ENCODE measurements at regions of chr17 and their contacts with region 1.

Region 1: GRCh38 chr17:42720996-42721583 is 23.8 kb downstream of the EZH1 start:
- DNase-seq: no peak
- H3K4me3 ChIP-seq: no peak overlapping the region
- H3K27ac ChIP-seq: no peak overlapping the region
- H3K4me1 ChIP-seq: no peaks in the 10 kb centered on the region
- H3K27me3 ChIP-seq: no peaks in the 10 kb centered on the region
- CTCF ChIP-seq: peak; percentile 58 to 76 (median 66)
- EP300 ChIP-seq: no peak
- POLR2A ChIP-seq: no peak

Region 2: DNA sequence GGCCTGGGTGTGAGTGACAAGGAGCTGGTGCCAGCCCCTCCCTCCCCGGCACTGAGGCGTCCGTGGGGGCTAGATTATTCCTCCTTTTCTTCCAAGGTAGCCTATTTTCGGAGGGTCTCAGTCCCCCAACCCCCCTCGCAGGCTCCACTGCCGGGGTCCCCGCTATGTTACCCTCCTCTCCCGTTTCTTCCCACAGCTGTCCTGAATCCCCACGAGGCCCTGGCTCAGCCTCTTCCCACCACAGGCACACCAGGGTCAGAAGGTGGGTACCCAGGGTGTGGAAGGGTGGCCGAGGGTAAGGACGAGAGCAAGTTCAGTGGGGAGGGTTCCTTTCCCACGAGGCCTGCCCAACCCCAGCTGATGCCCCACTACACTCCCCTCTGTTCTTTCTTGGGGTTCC is 40.5 kb after region 1 on chr17:
- intact Hi-C with region 1: loop called (anchors 2 kb)
- DNase-seq: no peak
- H3K4me3 ChIP-seq: peak overlapping the region; percentile 64 to 65 (median 64)
- H3K27ac ChIP-seq: peak overlapping the region; percentile 66 to 75 (median 74)
- H3K4me1 ChIP-seq: peaks cover 25 to 43% (median 41%) of the 10 kb centered on the region in 4 donors
- H3K27me3 ChIP-seq: peaks cover 0 to 33% (median 10%) of the 10 kb centered on the region in 4 donors
- CTCF ChIP-seq: no peak
- EP300 ChIP-seq: no peak
- POLR2A ChIP-seq: no peak

Region 3: DNA sequence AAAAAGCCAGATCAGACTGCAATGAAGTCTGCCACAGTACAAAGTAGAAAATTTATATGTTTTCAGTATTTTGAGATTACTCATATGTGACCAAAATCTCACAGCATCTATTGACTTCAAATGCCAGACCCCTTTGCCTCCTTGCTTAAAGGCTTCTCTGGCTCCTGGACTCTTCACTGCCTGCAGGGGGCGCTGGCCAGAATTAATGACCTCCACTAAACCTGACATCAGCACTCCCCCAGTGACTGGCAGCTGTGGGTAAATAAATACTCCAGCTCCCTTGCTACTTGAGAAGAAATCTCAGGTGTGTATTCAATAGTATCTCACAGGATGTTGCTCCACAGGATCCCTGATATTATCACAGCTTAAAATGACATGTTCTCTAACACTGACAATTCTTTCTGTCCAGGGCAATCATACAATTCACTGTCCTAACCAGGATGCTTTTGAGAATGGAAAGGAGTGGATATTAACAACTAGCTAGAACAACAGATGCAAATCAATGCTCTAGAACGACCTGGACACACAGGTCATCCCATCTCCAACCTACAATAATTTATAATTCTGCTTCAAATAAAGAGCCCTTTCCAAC is 99.0 kb after region 1 on chr17:
- intact Hi-C with region 1: loop called (anchors 5 kb)
- DNase-seq: no peak
- H3K4me3 ChIP-seq: no peak overlapping the region
- H3K27ac ChIP-seq: no peak overlapping the region
- H3K4me1 ChIP-seq: peaks cover 21 to 36% (median 32%) of the 10 kb centered on the region in 4 donors
- H3K27me3 ChIP-seq: no peaks in the 10 kb centered on the region
- CTCF ChIP-seq: peak; percentile 39 to 73 (median 42)
- EP300 ChIP-seq: no peak
- POLR2A ChIP-seq: no peak

Region 4: DNA sequence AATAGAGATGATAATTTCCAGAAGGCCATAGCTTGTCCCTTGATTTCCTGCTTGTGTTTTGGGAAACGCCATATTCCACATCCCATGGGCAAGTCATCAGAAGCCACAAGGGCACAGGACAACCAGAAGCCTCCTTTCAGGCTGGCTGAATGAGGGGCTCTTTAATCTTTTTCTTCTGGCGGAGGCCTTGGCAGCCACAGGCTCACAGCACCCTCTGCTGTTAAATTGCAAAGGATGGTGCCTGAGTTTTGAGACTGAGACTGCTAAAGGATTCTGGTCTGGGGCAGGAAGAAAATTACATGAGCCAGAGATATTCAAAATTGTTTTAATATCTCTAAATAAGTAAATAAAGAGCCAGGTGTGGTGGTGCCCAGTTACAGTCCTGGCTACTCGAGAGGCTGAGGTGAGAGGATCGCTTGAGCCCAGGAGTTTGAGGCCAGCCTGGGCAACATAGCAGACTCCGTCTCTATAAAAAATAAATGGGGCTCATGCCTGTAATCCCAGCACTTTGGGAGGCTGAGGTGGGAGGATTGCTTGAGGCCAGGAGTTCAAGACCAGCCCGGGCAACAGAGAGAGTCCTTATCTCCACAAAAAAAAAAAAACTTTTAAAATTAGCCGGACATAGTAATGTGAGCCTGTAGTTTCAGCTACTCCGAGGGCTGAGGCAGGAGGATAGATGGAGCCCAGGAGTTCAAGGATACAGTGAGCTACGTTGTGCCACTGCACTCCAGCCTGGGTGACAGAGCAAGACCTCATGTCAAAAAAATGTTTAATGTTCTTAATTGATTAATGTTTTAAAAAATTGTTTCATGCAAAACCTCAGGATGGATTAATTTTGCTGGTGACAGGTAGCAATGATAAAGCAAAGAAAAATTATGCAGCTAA is 216.9 kb after region 1 on chr17:
- intact Hi-C with region 1: loop called (anchors 10 kb)
- DNase-seq: no peak
- H3K4me3 ChIP-seq: no peak overlapping the region
- H3K27ac ChIP-seq: no peak overlapping the region
- H3K4me1 ChIP-seq: peaks cover 0 to 6% (median 0%) of the 10 kb centered on the region in 4 donors
- H3K27me3 ChIP-seq: no peaks in the 10 kb centered on the region
- CTCF ChIP-seq: peak; percentile 63 to 72 (median 68)
- EP300 ChIP-seq: no peak
- POLR2A ChIP-seq: no peak

Region 5: DNA sequence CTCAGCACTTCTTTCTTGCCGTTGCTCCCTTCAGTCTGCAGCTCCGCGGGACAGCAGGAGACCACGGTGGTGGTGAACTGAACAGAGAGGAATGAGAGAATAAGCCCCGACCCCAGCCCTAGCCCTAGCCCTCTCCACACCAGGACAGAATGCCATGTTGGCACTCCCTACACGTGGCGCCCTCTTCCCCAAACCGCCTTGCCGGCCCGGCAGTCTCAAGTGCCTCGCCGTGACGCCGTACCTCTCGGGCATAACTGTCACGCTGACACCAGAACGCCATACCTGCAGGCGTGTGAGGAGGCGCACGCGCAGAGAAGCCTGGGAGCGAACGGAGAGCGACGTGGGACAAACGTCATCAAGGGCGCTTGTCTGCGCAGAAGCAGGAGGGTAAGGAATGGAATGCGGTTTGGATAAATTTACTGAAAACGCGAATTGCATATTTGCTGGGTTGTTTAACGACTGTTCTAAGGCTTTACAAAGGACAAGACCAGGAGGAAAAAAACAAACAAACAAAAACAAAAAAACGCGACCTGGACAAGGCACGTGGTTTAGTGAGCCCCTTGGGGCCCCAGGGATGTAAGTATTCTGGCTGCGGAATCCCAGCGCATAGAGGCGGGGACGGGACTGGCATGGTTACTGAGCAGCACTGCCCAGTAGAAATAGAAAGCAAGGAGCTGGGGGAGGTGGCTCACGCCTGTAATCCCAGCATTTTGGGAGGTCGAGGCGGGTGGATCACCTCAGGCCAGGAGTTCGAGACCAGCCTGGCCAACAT is 243.3 kb after region 1 on chr17 and contains the start of gene AARSD1:
- intact Hi-C with region 1: no loop called
- DNase-seq: peak; percentile 94
- H3K4me3 ChIP-seq: peak within 1 kb of the TSS; percentile 64 to 73 (median 65)
- H3K27ac ChIP-seq: peak within 1 kb of the TSS; percentile 84 to 89 (median 86)
- H3K4me1 ChIP-seq: peaks cover 6 to 21% (median 18%) of the 10 kb centered on the region in 4 donors
- H3K27me3 ChIP-seq: no peaks in the 10 kb centered on the region
- CTCF ChIP-seq: peak in 1 of 3 experiments; percentile 30
- EP300 ChIP-seq: no peak
- POLR2A ChIP-seq: peak; percentile 72
- total RNA-seq, gene AARSD1: 21.9 to 35.7 (median 26.8) TPM

Measured in esophagus muscularis mucosa (tissue), 4 donors.